Pancreas (tissue), 10 donors: ENCODE measurements at regions of chr10 and their contacts with region 1.

Region 1: DNA sequence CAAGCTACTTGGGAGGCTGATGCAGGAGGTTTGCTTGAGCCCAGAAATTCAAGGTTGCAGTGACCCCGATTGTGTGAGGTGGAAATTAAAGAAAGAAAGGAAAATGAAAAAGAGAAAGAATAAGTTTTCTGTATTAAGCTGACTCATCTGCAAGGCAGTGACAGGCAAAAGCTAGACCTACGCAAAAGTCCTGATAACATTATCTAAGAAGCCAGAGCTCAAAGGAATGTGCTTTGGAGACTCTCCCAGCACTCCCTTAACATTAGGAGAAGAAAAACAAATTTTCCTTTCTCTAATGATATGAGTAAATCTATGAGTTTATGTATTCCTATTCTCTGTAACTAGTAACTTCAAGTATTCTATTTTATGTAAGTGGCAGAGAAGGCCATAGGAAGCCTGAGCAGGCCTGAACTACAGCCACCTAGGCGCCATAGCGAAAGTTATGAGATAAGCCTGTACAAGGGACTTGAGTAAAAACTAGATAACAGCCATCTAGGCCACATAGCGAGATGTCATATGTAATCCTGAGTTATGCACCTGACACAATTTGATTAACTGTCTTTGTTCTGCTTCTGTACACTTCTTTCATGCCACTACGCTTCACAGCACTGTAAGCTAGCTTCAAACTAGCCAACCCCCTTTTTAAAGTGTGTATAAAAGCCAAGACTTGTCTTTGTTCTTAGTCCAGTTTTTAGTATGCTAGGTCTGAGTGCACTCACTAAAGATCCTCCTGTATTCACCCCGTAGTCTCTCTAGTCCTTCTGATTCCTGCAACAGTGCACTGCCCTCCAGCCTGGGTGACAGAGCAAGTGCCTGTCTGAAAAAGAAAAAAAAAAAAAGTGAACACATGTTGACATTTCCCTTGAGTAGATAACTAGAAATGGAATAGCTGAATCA is 9.4 kb upstream of the ZWINT start:
- DNase-seq: no peak
- ATAC-seq: no peak
- H3K4me3 ChIP-seq: no peak overlapping the region
- H3K27ac ChIP-seq: no peak overlapping the region
- H3K4me1 ChIP-seq: no peaks in the 10 kb centered on the region
- H3K27me3 ChIP-seq: no peaks in the 10 kb centered on the region
- CTCF ChIP-seq: no peak

Region 2: GRCh38 chr10:56269181-56269580 is 101.3 kb before region 1 on chr10:
- intact Hi-C with region 1: no loop called
- DNase-seq: no peak
- ATAC-seq: no peak
- H3K4me3 ChIP-seq: no peak overlapping the region
- H3K27ac ChIP-seq: no peak overlapping the region
- H3K4me1 ChIP-seq: no peaks in the 10 kb centered on the region
- H3K27me3 ChIP-seq: no peaks in the 10 kb centered on the region
- CTCF ChIP-seq: no peak

Region 3: GRCh38 chr10:56920601-56921261 is 550.3 kb after region 1 on chr10:
- intact Hi-C with region 1: loop called in 1 of 3 experiments (anchors 5 kb)
- DNase-seq: no peak
- ATAC-seq: no peak
- H3K4me3 ChIP-seq: no peak overlapping the region
- H3K27ac ChIP-seq: no peak overlapping the region
- H3K4me1 ChIP-seq: no peaks in the 10 kb centered on the region
- H3K27me3 ChIP-seq: no peaks in the 10 kb centered on the region
- CTCF ChIP-seq: no peak